H1 (cell line): ENCODE measurements at regions of chr19 and their contacts with region 1.

Region 1: GRCh38 chr19:12974301-12975220 is 5.2 kb downstream of the DAND5 start:
- DNase-seq: no peak
- H3K4me3 ChIP-seq: no peak overlapping the region
- H3K27ac ChIP-seq: no peak overlapping the region
- H3K4me1 ChIP-seq: peaks cover 0 to 2% (median 0%) of the 10 kb centered on the region in 4 experiments; a peak in 2 of 7 replicates
- H3K27me3 ChIP-seq: no peaks in the 10 kb centered on the region
- CTCF ChIP-seq: no peak
- EP300 ChIP-seq: no peak
- POLR2A ChIP-seq: no peak
- RAD21 ChIP-seq: no peak

Region 2: DNA sequence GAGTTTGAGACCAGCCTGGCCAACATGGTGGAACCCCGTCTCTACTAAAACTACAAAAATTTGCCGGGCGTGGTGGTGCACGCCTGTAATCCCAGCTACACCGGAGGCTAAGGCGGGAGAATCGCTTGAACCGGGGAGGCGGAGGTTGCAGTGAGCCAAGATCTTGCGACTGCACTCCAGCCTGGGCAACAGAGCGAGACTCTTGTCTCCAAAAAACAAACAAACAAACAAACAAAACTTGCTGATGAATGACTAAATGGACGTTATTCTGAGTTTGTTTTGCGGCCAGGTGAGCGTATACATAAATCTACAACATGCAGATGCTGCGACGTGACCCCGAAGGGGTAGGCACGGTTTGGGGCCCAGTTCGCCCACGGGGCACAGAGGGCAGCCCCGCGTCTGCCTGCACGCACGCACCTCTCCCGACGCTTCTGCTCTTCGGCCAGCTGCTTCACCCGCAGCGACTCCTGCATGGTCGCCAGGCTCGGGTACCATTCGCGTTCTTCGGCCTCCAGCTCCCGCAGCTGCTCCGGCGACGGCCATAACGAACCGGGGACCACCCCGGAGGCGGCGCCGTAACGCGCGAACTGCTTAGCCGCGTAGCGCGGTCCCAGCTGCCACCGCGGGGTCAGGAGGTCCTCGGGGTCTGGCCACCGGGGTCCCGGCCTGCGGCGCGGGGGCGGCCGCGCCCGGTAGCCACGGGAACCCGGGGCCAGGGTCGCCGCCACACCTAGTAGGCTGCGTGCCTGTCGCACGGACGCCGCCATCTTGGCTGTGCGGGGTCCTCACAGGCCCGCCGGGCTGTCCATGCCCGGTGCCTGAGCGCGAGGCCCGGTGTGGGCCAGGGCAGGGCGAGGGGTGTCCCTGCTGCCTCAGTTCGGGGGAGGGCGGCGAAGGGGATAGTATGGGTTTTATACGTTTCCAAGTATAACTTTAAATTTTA is 17.8 kb before region 1 on chr19 and contains the start of gene GADD45GIP1:
- CTCF ChIA-PET with region 1: interaction called, 13 read pairs
- POLR2A ChIA-PET with region 1: interaction called, 5 read pairs
- DNase-seq: peak; percentile 38 to 89
- H3K4me3 ChIP-seq: peak within 1 kb of the TSS; percentile 82 to 91 (median 88)
- H3K27ac ChIP-seq: peak within 1 kb of the TSS; percentile 94
- H3K4me1 ChIP-seq: peaks cover 0 to 4% (median 2%) of the 10 kb centered on the region in 4 experiments; a peak in 3 of 7 replicates
- H3K27me3 ChIP-seq: no peaks in the 10 kb centered on the region
- CTCF ChIP-seq: no peak
- EP300 ChIP-seq: no peak
- POLR2A ChIP-seq: peak; percentile 96 to 97
- RAD21 ChIP-seq: no peak
- total RNA-seq, gene GADD45GIP1: 42.2 and 45.5 TPM in 2 replicates

Region 3: DNA sequence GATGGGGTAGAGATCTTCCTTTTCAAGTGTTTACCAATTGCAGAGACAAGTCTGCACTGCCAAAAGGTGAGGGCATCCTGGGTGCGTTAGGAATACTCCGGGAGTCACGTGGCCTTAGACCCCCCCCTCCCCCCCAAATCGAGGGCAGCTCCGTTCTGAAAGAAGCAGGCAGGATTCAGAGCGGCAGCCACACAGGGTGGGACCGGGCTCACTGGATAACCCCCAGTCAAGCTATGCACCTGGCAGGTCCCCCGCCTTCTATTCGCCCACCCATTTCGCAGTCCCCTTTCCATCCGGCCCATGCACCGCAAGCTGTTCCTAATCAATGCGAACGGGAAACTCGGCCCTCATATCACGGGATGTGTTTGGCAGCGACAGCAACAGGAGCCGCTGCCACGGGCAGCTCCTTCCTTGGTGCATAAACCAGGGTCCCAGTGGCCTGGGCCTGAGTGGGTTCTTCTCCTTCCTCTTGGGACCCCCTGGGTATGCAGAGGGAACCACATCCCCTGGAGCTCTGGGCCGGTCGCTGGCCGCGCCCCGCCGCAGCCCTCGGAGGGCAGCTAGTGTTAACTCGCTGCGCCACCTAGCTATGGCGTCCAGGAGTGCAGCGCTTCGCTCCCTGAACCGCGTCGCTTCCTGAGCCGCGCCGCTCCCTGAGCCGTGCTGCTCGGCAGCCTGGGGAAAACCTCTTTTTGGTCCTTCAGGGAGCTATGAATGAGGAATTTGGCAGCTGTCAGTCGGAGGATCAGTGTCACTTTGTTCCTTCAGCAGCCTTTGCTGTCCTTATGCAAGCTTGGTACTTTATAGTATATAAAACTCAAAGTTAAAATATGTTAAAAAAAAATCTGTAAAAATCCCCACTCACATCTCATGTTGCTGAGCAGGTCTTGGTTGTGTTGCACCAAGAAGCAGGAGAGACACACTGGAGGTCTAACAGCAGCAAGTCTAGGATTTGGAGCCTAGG is 86.7 kb after region 1 on chr19:
- CTCF ChIA-PET with region 1: interaction called, 153 read pairs
- POLR2A ChIA-PET with region 1: no interaction called
- DNase-seq: peak in 1 of 2 experiments; percentile 97
- H3K4me3 ChIP-seq: peak overlapping the region; percentile 17 to 60 (median 46); a peak in 7 of 8 replicates
- H3K27ac ChIP-seq: no peak overlapping the region
- H3K4me1 ChIP-seq: peaks cover 0 to 14% (median 9%) of the 10 kb centered on the region in 4 experiments; a peak in 6 of 7 replicates
- H3K27me3 ChIP-seq: peaks cover 56 to 76% (median 72%) of the 10 kb centered on the region in 4 experiments
- CTCF ChIP-seq: peak; percentile 95 to 98 (median 95)
- EP300 ChIP-seq: peak in 1 of 2 experiments; percentile 46; a peak in 1 of 3 replicates
- POLR2A ChIP-seq: no peak
- RAD21 ChIP-seq: peak; percentile 82 to 91

Region 4: GRCh38 chr19:13069415-13070359 is 95.1 kb after region 1 on chr19:
- CTCF ChIA-PET with region 1: interaction called, 153 read pairs
- POLR2A ChIA-PET with region 1: interaction called, 3 read pairs
- DNase-seq: no peak
- H3K4me3 ChIP-seq: no peak overlapping the region
- H3K27ac ChIP-seq: no peak overlapping the region
- H3K4me1 ChIP-seq: no peaks in the 10 kb centered on the region; a peak in 1 of 7 replicates
- H3K27me3 ChIP-seq: peaks cover 0 to 5% (median 2%) of the 10 kb centered on the region in 4 experiments; a peak in 3 of 7 replicates
- CTCF ChIP-seq: no peak
- EP300 ChIP-seq: no peak
- POLR2A ChIP-seq: no peak
- RAD21 ChIP-seq: no peak

Region 5: DNA sequence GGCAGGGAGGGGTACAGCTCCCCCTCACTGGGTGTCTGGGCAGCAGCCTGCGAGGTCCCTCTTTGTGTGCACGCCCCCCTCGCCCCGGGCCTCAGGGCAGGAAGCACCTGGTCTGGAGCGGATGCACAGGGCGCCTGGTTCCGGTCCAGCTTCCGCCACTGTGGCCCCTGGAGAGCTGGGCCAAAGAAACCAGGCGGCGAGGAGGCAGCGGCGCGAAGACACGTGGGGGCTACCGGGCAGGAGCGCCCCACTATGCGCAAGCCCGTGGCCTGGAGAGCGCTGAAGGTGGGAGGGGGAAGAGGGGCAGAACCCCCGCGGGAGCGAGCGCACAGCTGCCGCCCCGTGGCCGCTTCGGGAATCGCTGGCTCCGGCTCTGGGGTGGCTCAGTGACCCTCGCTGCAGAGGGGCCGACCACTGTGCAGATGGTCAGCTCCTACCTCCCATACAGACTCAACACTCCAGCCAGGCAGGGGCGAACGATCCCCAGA is 129.8 kb after region 1 on chr19:
- CTCF ChIA-PET with region 1: interaction called, 47 read pairs
- POLR2A ChIA-PET with region 1: interaction called, 3 read pairs
- DNase-seq: peak in 1 of 2 experiments; percentile 95
- H3K4me3 ChIP-seq: no peak overlapping the region
- H3K27ac ChIP-seq: no peak overlapping the region
- H3K4me1 ChIP-seq: peaks cover 0 to 23% (median 9%) of the 10 kb centered on the region in 4 experiments; a peak in 5 of 7 replicates
- H3K27me3 ChIP-seq: peaks cover 16 to 34% (median 28%) of the 10 kb centered on the region in 4 experiments
- CTCF ChIP-seq: peak; percentile 83 to 95 (median 86)
- EP300 ChIP-seq: no peak
- POLR2A ChIP-seq: no peak; a peak in 1 of 3 replicates
- RAD21 ChIP-seq: peak; percentile 34 to 58